Activated CD4-positive, alpha-beta memory T cell treated with anti-CD3 and anti-CD28 coated beads for 36 hours (primary cell): ENCODE measurements at regions of chr10 and their contacts with region 1.

Region 1: GRCh38 chr10:73857446-73857845 is 16.9 kb downstream of the CAMK2G start:
- DNase-seq: peak; percentile 80
- H3K4me3 Mint-ChIP-seq: peak overlapping the region; percentile 44
- H3K27ac Mint-ChIP-seq: peak overlapping the region; percentile 84
- H3K4me1 Mint-ChIP-seq: peaks cover 56% of the 10 kb centered on the region
- H3K27me3 Mint-ChIP-seq: no peaks in the 10 kb centered on the region

Region 2: GRCh38 chr10:73874267-73875138 is 17.1 kb after region 1 on chr10 and contains the start of gene CAMK2G:
- CTCF ChIA-PET with region 1: interaction called, 486 read pairs
- POLR2A ChIA-PET with region 1: interaction called, 7 read pairs
- intact Hi-C with region 1: loop called (anchors 1 kb)
- DNase-seq: peak; percentile 89
- H3K4me3 Mint-ChIP-seq: peak within 1 kb of the TSS; percentile 78
- H3K27ac Mint-ChIP-seq: peak within 1 kb of the TSS; percentile 66
- H3K4me1 Mint-ChIP-seq: peaks cover 54% of the 10 kb centered on the region
- H3K27me3 Mint-ChIP-seq: no peaks in the 10 kb centered on the region
- total RNA-seq, gene CAMK2G: 20.8 to 21.5 TPM